Activated naive CD4-positive, alpha-beta T cell treated with anti-CD3 and anti-CD28 coated beads, Interleukin-2, amount 10 ng/mL, durations not matched to agents 7 days and 5 days (primary cell): ENCODE measurements at regions of chr12 and their contacts with region 1.

Region 1: DNA sequence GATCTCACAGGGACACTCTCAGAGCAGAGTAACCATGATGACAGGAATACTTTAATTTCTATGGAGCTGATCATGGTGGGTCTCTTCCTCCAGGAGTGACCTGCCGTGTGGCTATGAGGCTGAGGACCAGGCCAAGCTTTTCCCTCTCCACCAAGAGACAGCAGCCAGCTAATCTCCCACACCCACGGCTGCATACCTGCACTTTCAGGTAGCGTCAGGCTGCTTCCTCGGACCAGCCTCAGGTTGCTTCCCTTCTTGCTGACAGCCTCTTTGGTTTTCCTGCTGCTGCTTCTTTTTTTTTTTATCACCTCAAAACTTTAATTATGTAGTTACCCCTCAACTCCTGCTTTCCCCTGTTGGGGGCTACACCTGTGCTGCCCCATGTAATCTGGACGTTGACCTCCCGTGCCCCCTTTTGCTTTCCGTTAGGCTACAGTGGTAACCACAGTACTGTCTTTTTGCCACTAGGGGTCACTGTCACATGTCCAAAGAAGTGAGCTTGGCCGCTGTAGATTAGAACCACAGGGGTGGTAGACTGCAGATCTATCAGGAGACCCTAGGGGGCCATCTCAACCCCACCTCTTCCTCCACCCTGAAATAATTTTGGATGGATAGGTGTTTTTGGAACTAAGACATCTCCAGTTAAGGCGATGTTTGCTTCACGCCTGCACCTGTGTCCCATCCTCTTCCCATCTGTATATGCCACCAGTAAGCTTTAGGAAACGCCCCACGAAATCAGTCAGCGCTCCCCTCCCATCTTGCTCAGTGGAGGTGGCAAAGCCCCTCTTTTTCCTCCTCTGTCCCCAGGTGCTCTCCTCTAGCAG is 7.8 kb upstream of the PIP4K2C start:
- DNase-seq: peak; percentile 79
- H3K4me3 Mint-ChIP-seq: no peak overlapping the region
- H3K27ac Mint-ChIP-seq: no peak overlapping the region
- H3K4me1 Mint-ChIP-seq: peaks cover 8% of the 10 kb centered on the region
- H3K27me3 Mint-ChIP-seq: peaks cover 7% of the 10 kb centered on the region

Region 2: GRCh38 chr12:57429473-57430111 is 153.6 kb before region 1 on chr12:
- CTCF ChIA-PET with region 1: no interaction called
- DNase-seq: no peak
- H3K4me3 Mint-ChIP-seq: peak overlapping the region; percentile 89
- H3K27ac Mint-ChIP-seq: peak overlapping the region; percentile 98
- H3K4me1 Mint-ChIP-seq: peaks cover 43% of the 10 kb centered on the region
- H3K27me3 Mint-ChIP-seq: no peaks in the 10 kb centered on the region

Region 3: GRCh38 chr12:57600395-57600794 is 17.2 kb after region 1 on chr12:
- CTCF ChIA-PET with region 1: interaction called, 12 read pairs
- DNase-seq: no peak
- H3K4me3 Mint-ChIP-seq: no peak overlapping the region
- H3K27ac Mint-ChIP-seq: no peak overlapping the region
- H3K4me1 Mint-ChIP-seq: peaks cover 17% of the 10 kb centered on the region
- H3K27me3 Mint-ChIP-seq: peaks cover 5% of the 10 kb centered on the region

Region 4: DNA sequence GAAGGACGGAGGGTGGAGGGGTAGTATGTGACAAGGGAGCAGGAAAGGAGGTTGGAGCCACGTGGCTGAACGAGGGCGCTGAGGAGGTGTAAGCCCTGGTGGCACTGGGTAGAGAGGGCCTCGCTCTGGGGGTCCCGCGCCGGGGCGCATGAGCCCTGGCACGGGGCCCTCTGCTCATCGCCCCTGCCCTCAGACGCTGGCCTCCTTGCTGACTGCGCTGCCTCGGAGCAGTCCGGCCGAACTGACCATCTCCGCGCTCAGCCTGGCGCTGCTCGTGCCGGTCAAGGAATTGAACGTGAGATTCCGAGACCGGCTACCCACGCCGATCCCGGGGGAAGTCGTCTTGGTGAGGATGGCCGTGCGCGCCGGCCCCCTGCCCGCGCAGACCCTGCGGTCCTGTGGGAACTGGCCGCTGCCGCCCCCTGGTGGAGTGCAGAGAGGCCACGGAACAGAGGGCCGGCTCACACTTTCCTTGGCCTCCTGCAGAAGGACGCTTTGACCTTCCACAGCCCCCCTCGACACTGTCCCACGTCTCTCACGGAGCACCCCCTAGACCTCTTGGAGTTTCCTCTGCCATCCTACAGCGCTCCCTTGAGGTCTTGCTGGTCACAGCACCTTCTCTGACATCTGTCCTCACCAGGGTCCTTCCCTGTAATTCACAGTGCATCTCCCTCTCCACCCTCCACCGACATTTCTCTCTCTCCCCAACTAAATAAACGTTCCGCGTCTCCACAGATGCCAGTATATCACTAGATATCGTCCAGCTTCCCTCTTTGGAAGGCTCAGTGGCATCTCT is 38.5 kb after region 1 on chr12:
- CTCF ChIA-PET with region 1: interaction called, 143 read pairs
- DNase-seq: peak; percentile 73
- H3K4me3 Mint-ChIP-seq: peak overlapping the region; percentile 59
- H3K27ac Mint-ChIP-seq: peak overlapping the region; percentile 50
- H3K4me1 Mint-ChIP-seq: peaks cover 30% of the 10 kb centered on the region
- H3K27me3 Mint-ChIP-seq: peaks cover 100% of the 10 kb centered on the region

Region 5: DNA sequence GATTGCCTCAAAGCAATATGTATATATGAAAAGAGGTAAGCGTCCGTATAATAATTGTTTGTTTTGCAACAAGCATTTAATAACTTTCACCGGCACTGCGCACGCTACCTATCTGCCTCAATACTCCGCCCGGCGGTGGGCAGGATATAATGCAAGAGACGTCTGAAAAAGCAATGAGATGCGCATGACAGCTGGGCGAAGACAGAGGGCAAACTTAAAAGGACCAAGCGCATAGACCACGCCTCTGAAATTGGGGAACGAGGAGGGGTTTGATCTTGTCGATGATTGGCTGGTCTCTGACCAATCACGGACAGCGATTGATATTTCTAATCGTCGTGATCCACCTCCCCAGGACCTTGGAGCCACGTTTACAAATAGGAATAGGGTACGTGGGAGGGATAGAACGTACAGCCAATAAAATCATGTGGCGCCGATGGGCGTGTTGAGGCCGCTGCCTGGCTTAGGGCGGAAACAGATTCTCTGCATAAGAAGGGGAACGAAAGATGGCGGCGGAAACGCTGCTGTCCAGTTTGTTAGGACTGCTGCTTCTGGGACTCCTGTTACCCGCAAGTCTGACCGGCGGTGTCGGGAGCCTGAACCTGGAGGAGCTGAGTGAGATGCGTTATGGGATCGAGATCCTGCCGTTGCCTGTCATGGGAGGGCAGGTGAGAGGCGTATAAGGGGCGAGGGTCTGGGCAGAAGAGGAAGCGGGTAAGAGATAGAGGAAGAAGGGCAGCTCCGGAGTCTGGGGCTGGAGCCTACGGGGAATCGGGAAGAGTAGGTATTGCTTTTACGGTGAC is 110.6 kb after region 1 on chr12 and contains the start of gene OS9:
- CTCF ChIA-PET with region 1: interaction called, 13 read pairs
- DNase-seq: peak; percentile 98
- H3K4me3 Mint-ChIP-seq: no peak within 1 kb of the TSS
- H3K27ac Mint-ChIP-seq: no peak within 1 kb of the TSS
- H3K4me1 Mint-ChIP-seq: peaks cover 5% of the 10 kb centered on the region
- H3K27me3 Mint-ChIP-seq: no peaks in the 10 kb centered on the region